Posterior cingulate gyrus (tissue), 11 donors: ENCODE measurements at regions of chr7 and their contacts with region 1.

Region 1: DNA sequence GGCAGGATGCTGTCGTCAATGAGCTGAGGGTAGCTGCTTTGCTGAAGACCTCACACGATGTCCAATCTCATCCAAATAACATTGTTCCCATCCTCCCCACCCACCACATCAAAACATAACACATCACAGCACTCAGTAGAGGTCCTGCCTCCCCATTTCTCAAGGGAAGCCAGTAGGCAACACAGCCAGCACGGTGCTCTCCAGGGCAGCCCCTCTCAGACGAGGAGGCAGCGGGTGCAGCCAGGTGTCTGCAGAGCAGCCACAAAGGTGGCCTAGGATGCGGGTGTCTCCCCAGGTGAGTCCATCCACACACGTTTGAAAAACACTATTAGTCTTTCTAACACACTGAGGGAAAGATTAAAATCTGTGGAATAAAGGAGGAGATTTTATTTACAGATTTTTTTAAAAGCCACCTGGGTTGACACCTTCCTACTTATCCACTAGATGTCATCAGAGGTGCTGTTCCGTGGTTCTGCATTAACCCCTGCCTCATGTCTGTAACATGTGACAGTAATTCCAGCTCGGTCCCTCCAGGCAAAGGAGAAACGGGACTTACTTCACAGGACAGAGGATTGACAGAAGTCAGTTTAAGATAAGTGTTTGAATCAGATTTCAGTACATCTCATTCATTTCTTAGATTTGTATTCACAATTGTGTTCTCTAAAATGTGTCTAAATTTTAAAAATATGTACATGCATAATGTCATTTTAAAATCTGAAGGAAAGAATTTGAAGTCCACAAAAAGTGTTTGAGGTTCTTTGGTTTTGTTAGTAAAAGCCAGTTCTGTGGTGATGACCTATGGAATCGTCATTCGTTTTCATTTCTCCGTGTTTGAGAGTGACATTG is 68.0 kb downstream of the LANCL2 start:
- DNase-seq: peak in 1 of 10 donors; percentile 49

Region 2: DNA sequence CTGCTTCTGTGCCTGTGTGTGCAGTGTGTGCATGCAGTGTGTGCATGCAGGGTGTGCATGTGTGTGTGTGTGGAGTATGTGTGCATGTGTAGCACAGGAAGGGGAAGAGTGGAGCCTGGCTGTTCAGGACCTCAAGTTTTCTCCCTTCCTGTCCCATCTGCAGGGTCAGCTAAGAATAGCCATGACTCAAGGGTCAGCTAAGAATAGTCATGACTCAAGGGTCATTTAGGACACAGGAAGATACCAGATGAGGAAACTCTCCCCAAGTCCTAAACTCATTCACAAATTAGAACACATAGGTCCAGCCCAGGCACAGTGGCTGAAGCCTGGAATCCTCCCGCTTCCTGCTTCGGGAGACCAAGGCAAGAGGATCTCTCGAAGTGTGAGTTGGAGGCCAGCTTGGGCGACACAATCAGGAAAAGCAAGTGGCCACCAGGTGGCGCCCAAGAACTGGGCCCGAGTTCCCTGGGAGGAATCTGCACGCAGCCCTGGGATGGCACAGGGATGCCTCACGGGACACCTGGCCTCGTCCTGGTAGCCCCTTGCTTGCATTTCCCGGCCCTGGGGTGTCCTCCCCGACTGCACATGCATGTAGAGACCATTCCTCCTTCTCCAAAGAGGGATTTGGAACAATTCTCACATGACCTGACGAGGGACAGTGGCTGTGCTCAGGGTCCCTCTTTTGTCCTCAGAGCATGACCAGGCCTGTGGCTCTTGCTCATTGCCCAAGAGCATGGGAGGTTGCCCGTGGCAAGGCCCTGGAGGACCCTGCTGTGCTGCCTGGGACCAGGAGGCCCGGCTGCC is 160.6 kb after region 1 on chr7:
- intact Hi-C with region 1: loop called (anchors 10 kb)
- DNase-seq: peak in 8 of 10 donors; percentile 44 to 94 (median 68)